HepG2 (cell line): ENCODE measurements at regions of chr10 and their contacts with region 1.

Region 1: GRCh38 chr10:110007701-110008517 is at the start of gene ADD3:
- DNase-seq: peak; percentile 92
- ATAC-seq: peak; percentile 85
- H3K4me3 ChIP-seq: peak within 1 kb of the TSS; percentile 77 to 94 (median 85)
- H3K27ac ChIP-seq: peak within 1 kb of the TSS; percentile 98
- H3K4me1 ChIP-seq: peaks cover 63% of the 10 kb centered on the region
- H3K27me3 ChIP-seq: no peaks in the 10 kb centered on the region
- CTCF ChIP-seq: no peak
- EP300 ChIP-seq: no peak; a peak in 1 of 4 replicates
- POLR2A ChIP-seq: peak; percentile 74 to 80
- RAD21 ChIP-seq: no peak
- total RNA-seq, gene ADD3: 57.5 and 70.2 TPM in 2 replicates

Region 2: GRCh38 chr10:109956454-109957091 is 51.3 kb before region 1 on chr10:
- CTCF ChIA-PET with region 1: no interaction called
- POLR2A ChIA-PET with region 1: interaction called, 5 read pairs
- in situ Hi-C with region 1: no loop called
- intact Hi-C with region 1: loop called (anchors 1 kb)
- DNase-seq: peak; percentile 68
- ATAC-seq: peak; percentile 96
- H3K4me3 ChIP-seq: no peak overlapping the region
- H3K27ac ChIP-seq: no peak overlapping the region
- H3K4me1 ChIP-seq: 0 out of 2 replicates have a peak, but pooled peaks cover 10% of the 10 kb centered on the region
- H3K27me3 ChIP-seq: no peaks in the 10 kb centered on the region
- CTCF ChIP-seq: peak; percentile 73
- EP300 ChIP-seq: no peak
- POLR2A ChIP-seq: no peak
- RAD21 ChIP-seq: peak; percentile 61; the same call in 1 of the 2 replicates

Region 3: GRCh38 chr10:109972372-109973001 is 35.4 kb before region 1 on chr10:
- CTCF ChIA-PET with region 1: no interaction called
- POLR2A ChIA-PET with region 1: interaction called, 70 read pairs
- in situ Hi-C with region 1: loop called (anchors 5 kb)
- intact Hi-C with region 1: loop called (anchors 2 kb)
- DNase-seq: no peak
- ATAC-seq: no peak
- H3K4me3 ChIP-seq: no peak overlapping the region
- H3K27ac ChIP-seq: no peak overlapping the region
- H3K4me1 ChIP-seq: peaks cover 94% of the 10 kb centered on the region
- H3K27me3 ChIP-seq: no peaks in the 10 kb centered on the region
- CTCF ChIP-seq: no peak
- EP300 ChIP-seq: no peak
- POLR2A ChIP-seq: no peak
- RAD21 ChIP-seq: no peak

Region 4: DNA sequence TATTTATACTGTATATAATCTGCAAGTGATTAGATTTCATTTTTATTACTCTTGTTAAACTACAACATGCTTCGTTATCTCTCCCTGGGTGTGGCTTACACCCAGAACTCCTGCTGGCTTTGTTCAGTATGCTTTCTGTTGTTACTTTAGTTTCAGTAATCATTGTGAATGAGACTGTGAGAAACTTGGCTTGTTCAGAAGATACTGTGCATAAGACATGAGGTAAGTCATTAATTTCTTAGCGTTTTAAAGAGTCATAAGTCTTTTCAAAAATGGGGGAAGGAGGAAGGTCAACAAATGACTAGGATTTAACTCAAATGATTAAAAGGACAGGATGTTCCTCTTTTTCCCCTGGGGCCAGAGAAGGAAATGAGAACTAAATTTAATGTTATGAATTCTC is 11.7 kb before region 1 on chr10:
- CTCF ChIA-PET with region 1: no interaction called
- POLR2A ChIA-PET with region 1: interaction called, 19 read pairs
- in situ Hi-C with region 1: no loop called
- intact Hi-C with region 1: no loop called
- DNase-seq: no peak
- ATAC-seq: no peak
- H3K4me3 ChIP-seq: no peak overlapping the region
- H3K27ac ChIP-seq: no peak overlapping the region
- H3K4me1 ChIP-seq: peaks cover 62% of the 10 kb centered on the region
- H3K27me3 ChIP-seq: no peaks in the 10 kb centered on the region
- CTCF ChIP-seq: no peak
- EP300 ChIP-seq: no peak
- POLR2A ChIP-seq: no peak
- RAD21 ChIP-seq: no peak

Region 5: GRCh38 chr10:110022716-110023504 is 15.0 kb after region 1 on chr10:
- CTCF ChIA-PET with region 1: no interaction called
- POLR2A ChIA-PET with region 1: no interaction called
- in situ Hi-C with region 1: no loop called
- intact Hi-C with region 1: no loop called
- DNase-seq: no peak
- ATAC-seq: no peak
- H3K4me3 ChIP-seq: no peak overlapping the region
- H3K27ac ChIP-seq: no peak overlapping the region
- H3K4me1 ChIP-seq: no peaks in the 10 kb centered on the region
- H3K27me3 ChIP-seq: no peaks in the 10 kb centered on the region
- CTCF ChIP-seq: no peak
- EP300 ChIP-seq: no peak
- POLR2A ChIP-seq: no peak
- RAD21 ChIP-seq: no peak